A549 (cell line): ENCODE measurements at regions of chr1 and their contacts with region 1.

Region 1: GRCh38 chr1:109773146-109773899 is 9.6 kb upstream of the EPS8L3 start:
- DNase-seq: peak; percentile 73 to 78
- ATAC-seq: peak; percentile 82 to 88
- H3K4me3 ChIP-seq: no peak overlapping the region
- H3K27ac ChIP-seq: peak overlapping the region; percentile 3 to 77; a peak in 3 of 6 replicates
- H3K4me1 ChIP-seq: peaks cover 35% of the 10 kb centered on the region
- CTCF ChIP-seq: peak; percentile 70
- EP300 ChIP-seq: no peak
- POLR2A ChIP-seq: no peak
- RAD21 ChIP-seq: peak; percentile 87 to 91

Region 2: GRCh38 chr1:109521002-109521951 is 252.0 kb before region 1 on chr1:
- CTCF ChIA-PET with region 1: no interaction called
- POLR2A ChIA-PET with region 1: no interaction called
- DNase-seq: no peak
- ATAC-seq: no peak
- H3K4me3 ChIP-seq: no peak overlapping the region
- H3K27ac ChIP-seq: no peak overlapping the region
- H3K4me1 ChIP-seq: no peaks in the 10 kb centered on the region
- CTCF ChIP-seq: no peak
- EP300 ChIP-seq: no peak
- POLR2A ChIP-seq: no peak
- RAD21 ChIP-seq: no peak

Region 3: DNA sequence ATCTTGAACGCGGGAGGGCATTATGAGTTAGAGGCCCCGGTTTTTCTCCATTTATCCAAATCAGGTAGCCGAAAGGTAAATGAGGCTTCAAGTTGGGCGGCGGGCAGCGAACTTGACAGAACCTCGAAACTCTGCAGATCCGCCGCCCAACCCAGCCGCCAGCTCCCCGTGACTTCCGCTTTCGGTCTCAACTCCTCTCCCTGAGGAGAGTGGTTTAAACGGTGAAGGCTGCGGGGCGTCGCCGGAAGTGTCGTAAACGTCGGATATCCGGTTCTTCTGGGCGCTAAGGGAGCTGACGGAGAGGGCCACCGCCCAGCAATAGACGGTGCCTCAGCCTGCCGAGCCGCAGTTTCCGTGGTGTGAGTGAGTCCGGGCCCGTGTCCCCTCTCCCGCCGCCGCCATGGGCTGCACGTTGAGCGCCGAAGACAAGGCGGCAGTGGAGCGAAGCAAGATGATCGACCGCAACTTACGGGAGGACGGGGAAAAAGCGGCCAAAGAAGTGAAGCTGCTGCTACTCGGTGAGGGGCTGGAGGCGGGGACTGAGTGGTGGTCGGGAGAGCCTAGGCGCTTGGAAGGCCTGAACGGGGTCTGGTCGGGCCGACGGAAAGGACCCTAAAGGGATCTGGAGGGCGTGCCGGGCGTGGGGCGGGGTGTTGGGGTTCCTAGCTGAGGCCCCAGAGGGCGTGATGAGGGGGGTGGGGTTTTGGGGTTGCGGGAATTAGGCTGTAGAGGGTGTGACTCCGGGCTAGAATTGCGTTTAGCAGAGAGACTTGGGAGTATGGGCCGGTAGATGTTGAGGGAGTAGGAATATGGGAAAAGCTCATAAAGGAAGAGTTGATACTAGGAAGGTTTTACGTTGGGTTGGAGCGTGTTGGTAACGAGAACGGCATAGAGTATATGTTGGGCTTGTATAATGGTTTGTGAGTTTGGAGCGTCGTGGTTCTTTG is 224.7 kb before region 1 on chr1 and contains the start of gene GNAI3:
- CTCF ChIA-PET with region 1: interaction called, 149 read pairs
- POLR2A ChIA-PET with region 1: interaction called, 3 read pairs
- DNase-seq: peak; percentile 91 to 93
- ATAC-seq: peak; percentile 97 to 99
- H3K4me3 ChIP-seq: peak within 1 kb of the TSS; percentile 99
- H3K27ac ChIP-seq: peak within 1 kb of the TSS; percentile 95 to 96
- H3K4me1 ChIP-seq: peaks cover 21% of the 10 kb centered on the region
- CTCF ChIP-seq: no peak
- EP300 ChIP-seq: no peak
- POLR2A ChIP-seq: peak; percentile 83
- RAD21 ChIP-seq: no peak
- polyA plus RNA-seq, gene GNAI3: 6.1 and 8.7 TPM in 2 replicates

Region 4: DNA sequence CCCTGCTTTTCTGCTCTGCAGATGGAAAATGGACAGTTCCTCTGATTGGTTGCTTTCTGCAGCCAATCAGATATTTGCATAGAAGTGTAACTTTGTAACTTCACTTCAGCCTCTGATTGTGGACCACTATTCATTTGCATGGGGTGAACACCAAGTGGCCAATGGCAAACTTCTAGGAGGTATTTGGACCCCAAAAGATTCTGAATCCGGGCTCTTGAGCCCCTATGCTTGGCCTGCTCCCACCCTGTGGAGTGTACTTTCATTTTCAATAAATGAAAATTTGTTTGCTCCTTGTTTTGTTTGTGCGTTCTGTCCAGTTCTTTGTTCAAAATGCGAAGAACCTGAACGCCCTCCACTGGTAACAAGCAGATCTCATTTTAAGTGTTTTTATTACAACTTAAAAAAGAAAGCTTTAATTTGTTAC is 123.8 kb before region 1 on chr1:
- CTCF ChIA-PET with region 1: interaction called, 295 read pairs
- POLR2A ChIA-PET with region 1: interaction called, 3 read pairs
- DNase-seq: peak in 1 of 2 experiments; percentile 46
- ATAC-seq: peak in 1 of 2 experiments; percentile 67; a peak in 3 of 6 replicates
- H3K4me3 ChIP-seq: 0 out of 3 replicates have a peak overlapping the region, but pooled peaks have one; percentile 21
- H3K27ac ChIP-seq: peak overlapping the region; percentile 57 to 63; a peak in 5 of 6 replicates
- H3K4me1 ChIP-seq: peaks cover 17% of the 10 kb centered on the region; the same call in 2 of the 3 replicates
- CTCF ChIP-seq: peak; percentile 55
- EP300 ChIP-seq: no peak
- POLR2A ChIP-seq: no peak
- RAD21 ChIP-seq: peak; percentile 48 to 50

Region 5: DNA sequence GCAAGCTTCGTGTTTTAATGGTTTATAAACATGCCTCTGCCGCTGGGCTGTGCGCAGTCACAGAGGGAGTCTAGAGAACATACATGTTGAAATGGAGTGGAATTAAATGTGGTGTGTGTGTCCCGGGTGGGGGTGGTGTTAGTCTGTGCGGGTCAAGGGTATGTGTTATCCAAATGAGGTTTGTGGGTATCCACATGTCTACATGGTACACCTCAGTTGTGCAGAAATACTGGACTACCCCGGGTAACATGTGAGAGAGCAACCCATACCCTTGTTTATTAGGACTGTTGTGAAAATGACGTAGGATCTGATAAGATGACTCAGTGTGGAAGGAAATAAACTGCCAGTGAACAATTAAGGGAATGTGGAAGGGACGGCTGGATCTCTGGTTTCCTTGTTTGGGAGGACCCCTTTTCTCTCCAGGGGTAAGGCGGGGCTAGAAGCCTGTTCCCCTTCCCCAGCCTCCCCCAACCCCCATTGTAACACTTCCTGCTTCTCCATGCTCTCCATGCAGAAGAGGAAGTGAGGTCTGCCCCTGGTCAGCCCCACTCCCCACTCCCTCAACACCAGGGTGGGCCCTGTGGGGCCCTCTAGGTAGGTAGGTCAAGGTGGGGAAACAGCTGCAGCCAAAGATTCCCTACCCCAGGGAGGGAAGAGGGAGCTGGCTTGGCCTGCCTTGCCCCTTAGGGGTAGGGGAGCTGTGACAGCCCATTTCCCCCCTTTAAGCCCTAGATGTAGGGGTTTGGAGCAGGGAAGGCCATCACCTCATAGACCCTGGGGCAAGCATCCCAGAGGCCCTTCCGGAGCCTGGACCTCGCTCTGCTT is 10.3 kb before region 1 on chr1:
- CTCF ChIA-PET with region 1: interaction called, 42 read pairs
- POLR2A ChIA-PET with region 1: no interaction called
- DNase-seq: no peak
- ATAC-seq: no peak
- H3K4me3 ChIP-seq: peak overlapping the region; percentile 23; the same call in 1 of the 3 replicates
- H3K27ac ChIP-seq: peak overlapping the region; percentile 70 to 79
- H3K4me1 ChIP-seq: peaks cover 18% of the 10 kb centered on the region
- CTCF ChIP-seq: no peak
- EP300 ChIP-seq: no peak
- POLR2A ChIP-seq: no peak
- RAD21 ChIP-seq: no peak

Region 6: DNA sequence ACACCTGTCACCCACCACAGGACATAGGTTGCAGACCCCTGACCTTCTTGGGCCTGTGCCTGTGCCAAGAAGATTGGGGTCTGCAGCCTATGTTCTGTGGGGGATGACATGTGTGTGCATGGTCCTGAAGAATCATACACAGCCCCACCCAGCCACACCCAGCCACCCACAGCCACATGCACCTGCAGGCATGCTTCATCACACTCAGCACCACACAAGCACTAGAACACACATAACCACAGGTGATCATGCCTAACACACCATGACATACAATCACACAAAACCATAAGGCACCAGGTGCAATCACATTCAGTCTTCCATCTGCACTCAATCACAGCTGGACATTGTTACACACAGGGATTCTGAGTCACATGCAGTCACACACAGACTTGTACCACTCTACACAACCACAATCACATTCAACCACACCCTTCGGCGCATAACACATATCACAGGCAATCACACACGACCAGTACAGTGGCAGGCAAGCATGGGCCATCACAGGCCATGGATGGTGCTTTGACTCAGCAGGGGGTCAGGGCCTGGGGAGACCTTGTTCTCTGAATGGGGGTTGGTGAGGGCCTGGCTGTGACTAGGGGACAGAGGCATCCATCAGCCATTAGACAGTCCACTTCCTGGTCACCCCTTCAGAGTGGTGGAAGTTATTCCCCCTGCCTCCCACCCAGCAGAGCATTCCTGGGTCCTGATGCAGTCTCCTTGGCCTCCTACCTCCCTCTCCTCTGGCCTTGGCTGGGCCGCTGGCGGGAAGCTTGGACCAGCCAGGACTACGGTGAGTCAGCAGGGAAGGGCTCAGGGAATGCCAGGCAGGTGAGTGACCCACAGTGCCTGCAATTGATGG is 34.7 kb after region 1 on chr1:
- CTCF ChIA-PET with region 1: interaction called, 12 read pairs
- POLR2A ChIA-PET with region 1: no interaction called
- DNase-seq: peak in 1 of 2 experiments; percentile 45
- ATAC-seq: peak; percentile 75 to 88; a peak in 5 of 6 replicates
- H3K4me3 ChIP-seq: no peak overlapping the region
- H3K27ac ChIP-seq: peak overlapping the region; percentile 60 to 86
- H3K4me1 ChIP-seq: peaks cover 18% of the 10 kb centered on the region
- CTCF ChIP-seq: no peak
- EP300 ChIP-seq: no peak
- POLR2A ChIP-seq: no peak
- RAD21 ChIP-seq: no peak

Region 7: DNA sequence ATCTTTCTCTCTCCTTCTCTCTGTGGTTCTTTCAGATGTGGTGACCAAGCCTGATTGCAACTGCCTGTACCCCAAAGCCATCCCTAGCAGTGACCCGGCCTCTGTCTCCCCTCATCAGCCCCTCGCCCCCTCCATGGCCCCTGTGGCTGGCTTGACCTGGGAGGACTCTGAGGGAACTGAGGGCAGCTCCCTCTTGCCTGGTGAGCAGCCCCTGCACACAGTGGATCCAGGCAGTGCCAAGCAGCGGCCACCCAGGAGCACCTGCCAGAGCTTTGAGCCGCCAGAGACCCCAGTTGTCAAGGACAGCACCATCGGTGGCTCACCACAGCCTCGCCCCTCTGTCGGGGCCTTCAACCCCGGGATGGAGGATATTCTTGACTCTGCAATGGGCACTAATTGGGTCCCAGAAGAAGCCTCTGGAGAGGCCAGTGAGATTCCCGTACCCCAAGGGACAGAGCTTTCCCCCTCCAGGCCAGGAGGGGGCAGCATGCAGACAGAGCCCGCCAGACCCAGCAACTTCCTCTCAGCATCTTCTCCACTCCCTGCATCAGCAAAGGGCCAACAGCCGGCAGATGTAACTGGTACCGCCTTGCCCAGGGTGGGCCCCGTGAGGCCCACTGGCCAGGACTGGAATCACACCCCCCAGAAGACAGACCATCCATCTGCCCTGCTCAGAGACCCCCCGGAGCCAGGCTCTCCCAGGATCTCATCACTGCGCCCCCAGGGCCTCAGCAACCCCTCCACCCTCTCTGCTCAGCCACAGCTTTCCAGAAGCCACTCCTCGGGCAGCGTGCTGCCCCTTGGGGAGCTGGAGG is 150.0 kb after region 1 on chr1:
- CTCF ChIA-PET with region 1: interaction called, 19 read pairs
- POLR2A ChIA-PET with region 1: no interaction called
- DNase-seq: no peak
- ATAC-seq: peak in 1 of 2 experiments; percentile 70; a peak in 4 of 6 replicates
- H3K4me3 ChIP-seq: no peak overlapping the region
- H3K27ac ChIP-seq: peak overlapping the region; percentile 37 to 88; a peak in 3 of 6 replicates
- H3K4me1 ChIP-seq: peaks cover 27% of the 10 kb centered on the region
- CTCF ChIP-seq: peak; percentile 34
- EP300 ChIP-seq: no peak
- POLR2A ChIP-seq: no peak
- RAD21 ChIP-seq: peak; percentile 40 to 56; a peak in 3 of 5 replicates

Region 8: DNA sequence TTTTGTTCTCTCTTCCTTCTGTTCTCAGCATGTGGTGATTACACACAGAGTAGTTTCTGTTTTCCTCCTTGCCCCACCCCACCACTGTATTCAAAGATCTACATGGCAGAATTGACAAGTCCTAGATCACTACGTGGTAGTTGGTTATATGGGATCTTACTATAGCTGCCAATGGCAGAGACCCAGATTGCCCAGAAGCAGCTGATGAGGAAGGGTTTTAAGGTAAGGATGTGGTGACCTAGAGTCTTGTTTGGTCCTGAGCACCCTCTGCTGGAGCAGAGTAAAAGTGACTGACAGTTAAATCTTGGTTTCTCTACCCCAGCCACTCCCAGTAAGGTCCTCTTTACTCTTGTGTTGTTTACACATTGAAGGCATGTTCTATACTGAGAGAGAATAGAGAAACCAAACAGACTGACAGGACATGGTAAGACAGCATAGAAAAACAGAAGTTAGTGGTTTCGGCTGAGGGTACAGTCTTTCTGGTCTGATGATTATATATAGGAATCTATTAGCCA is 238.3 kb after region 1 on chr1:
- CTCF ChIA-PET with region 1: interaction called, 41 read pairs
- POLR2A ChIA-PET with region 1: no interaction called
- DNase-seq: peak; percentile 56 to 61
- ATAC-seq: peak; percentile 92 to 97
- H3K4me3 ChIP-seq: no peak overlapping the region
- H3K27ac ChIP-seq: 0 out of 6 replicates have a peak overlapping the region, but pooled peaks of 1 of the 2 experiments have one; percentile 3
- H3K4me1 ChIP-seq: peaks cover 17% of the 10 kb centered on the region
- CTCF ChIP-seq: peak; percentile 53
- EP300 ChIP-seq: no peak
- POLR2A ChIP-seq: no peak
- RAD21 ChIP-seq: peak; percentile 59 to 65